Dendritic cell treated with granulocyte-macrophage colony-stimulating factor and Interleukin-4, amounts not matched to agents 40 ng/mL and 50 ng/mL, for 4 days (primary cell): ENCODE measurements at regions of chr9 and their contacts with region 1.

Region 1: GRCh38 chr9:114291064-114291474 is 31.8 kb upstream of the ORM1 start:
- H3K4me3 Mint-ChIP-seq: no peak overlapping the region
- H3K27ac Mint-ChIP-seq: no peak overlapping the region
- H3K4me1 Mint-ChIP-seq: no peaks in the 10 kb centered on the region
- H3K27me3 Mint-ChIP-seq: peaks cover 18% of the 10 kb centered on the region

Region 2: DNA sequence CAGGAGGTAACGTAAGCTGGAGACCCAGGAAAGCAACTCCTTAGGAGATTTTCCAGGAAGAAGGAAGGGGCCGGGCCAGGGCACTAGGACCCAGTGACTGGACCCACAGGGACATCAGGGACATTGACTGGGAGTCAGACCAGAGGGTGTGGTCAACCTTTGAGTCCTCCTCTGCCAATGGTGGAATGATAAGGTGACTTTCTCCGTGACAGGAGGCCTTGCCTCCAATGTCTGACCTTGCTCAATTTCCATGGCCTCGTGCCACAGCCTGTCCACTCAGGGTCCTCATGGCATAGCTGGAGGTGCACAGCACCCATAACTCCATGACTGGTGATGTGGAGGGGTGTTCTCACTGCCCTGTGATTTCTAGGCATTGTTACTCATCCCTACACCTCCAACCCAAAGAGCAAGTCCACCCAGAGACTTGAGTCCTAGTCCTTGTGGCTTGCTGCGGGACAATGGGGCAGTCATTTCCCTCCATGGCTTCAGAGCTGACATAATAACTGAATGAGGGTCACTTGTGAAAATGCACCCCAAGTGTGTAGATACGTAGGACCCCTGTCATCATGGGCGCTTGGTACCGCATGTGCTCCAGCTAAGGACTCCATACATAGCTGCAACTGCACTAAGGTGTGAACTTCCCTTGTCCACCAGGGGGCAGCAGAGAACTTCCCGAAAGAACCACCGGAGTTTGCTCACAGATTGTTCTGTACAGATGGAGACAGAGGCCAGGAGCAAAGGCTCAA is 208.9 kb before region 1 on chr9:
- intact Hi-C with region 1: loop called (anchors 1 kb)
- H3K4me3 Mint-ChIP-seq: no peak overlapping the region
- H3K27ac Mint-ChIP-seq: no peak overlapping the region
- H3K4me1 Mint-ChIP-seq: no peaks in the 10 kb centered on the region
- H3K27me3 Mint-ChIP-seq: peaks cover 2% of the 10 kb centered on the region

Region 3: GRCh38 chr9:114108016-114108833 is 182.8 kb before region 1 on chr9:
- intact Hi-C with region 1: loop called (anchors 2 kb)
- H3K4me3 Mint-ChIP-seq: no peak overlapping the region
- H3K27ac Mint-ChIP-seq: no peak overlapping the region
- H3K4me1 Mint-ChIP-seq: no peaks in the 10 kb centered on the region
- H3K27me3 Mint-ChIP-seq: peaks cover 20% of the 10 kb centered on the region

Region 4: GRCh38 chr9:114155263-114155972 is 135.7 kb before region 1 on chr9 and contains the start of gene COL27A1:
- intact Hi-C with region 1: loop called (anchors 1 kb)
- H3K4me3 Mint-ChIP-seq: peak within 1 kb of the TSS; percentile 67
- H3K27ac Mint-ChIP-seq: no peak within 1 kb of the TSS
- H3K4me1 Mint-ChIP-seq: peaks cover 14% of the 10 kb centered on the region
- H3K27me3 Mint-ChIP-seq: peaks cover 68% of the 10 kb centered on the region

Region 5: GRCh38 chr9:114405294-114406034 is 114.4 kb after region 1 on chr9:
- intact Hi-C with region 1: no loop called
- H3K4me3 Mint-ChIP-seq: no peak overlapping the region
- H3K27ac Mint-ChIP-seq: no peak overlapping the region
- H3K4me1 Mint-ChIP-seq: peaks cover 19% of the 10 kb centered on the region
- H3K27me3 Mint-ChIP-seq: no peaks in the 10 kb centered on the region